B cell (primary cell): ENCODE measurements at regions of chrX and their contacts with region 1.

Region 1: DNA sequence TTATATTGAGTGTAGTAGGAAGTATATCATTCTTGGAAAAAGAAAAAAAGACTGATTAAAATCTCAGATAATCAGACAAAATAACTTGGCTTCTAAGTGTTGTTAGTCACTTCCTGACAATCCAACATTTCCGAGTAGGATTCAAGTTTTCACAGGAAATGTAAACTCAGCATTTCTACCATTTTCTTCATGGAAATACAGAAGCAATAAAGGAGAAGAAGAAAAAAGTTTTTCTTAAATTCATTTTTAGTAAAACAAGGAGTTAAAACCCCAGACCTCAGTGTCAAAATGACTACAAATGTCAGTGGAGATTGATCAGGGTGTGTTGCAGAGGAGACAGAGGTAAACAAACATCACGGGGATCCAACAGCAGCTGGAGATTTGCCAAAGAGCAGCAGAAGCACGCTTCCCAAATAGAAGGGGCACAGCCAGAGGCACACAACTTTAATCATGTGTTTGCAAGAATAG is 129.3 kb upstream of the FAM9B start:
- DNase-seq: no peak
- ATAC-seq: no peak
- H3K4me3 ChIP-seq: no peak overlapping the region
- H3K4me3 Mint-ChIP-seq: no peak overlapping the region
- H3K27ac ChIP-seq: no peak overlapping the region
- H3K27ac Mint-ChIP-seq: no peak overlapping the region
- H3K4me1 ChIP-seq: peaks cover 5 to 15% of the 10 kb centered on the region in 2 donors
- H3K4me1 Mint-ChIP-seq: peaks cover 26% of the 10 kb centered on the region
- H3K27me3 ChIP-seq: peaks cover 0 to 23% (median 9%) of the 10 kb centered on the region in 4 experiments
- H3K27me3 Mint-ChIP-seq: peaks cover 29% of the 10 kb centered on the region
- CTCF ChIP-seq: no peak

Region 2: DNA sequence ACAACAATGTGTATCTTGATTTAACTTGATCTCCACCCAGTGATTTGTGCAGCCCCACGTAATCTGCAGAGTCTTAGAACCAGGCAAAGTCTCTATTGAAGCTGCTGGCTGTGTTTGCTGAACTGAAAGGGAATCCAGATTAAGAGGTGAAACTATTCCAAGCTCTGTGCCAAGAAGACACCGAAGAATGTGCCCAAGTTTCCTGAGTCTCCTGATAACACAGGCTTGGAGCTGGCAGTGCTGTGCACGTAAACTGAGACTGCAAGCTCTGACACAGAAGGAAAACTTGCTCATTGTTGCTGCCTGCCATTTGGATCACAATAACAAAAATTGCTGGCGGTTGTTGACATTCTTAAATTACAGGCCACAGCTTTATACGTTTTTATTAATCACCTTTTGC is 758.8 kb before region 1 on chrX:
- CTCF ChIA-PET with region 1: no interaction called
- POLR2A ChIA-PET with region 1: no interaction called
- intact Hi-C with region 1: no loop called
- DNase-seq: no peak
- ATAC-seq: no peak
- H3K4me3 ChIP-seq: no peak overlapping the region
- H3K4me3 Mint-ChIP-seq: no peak overlapping the region
- H3K27ac ChIP-seq: no peak overlapping the region
- H3K27ac Mint-ChIP-seq: no peak overlapping the region
- H3K4me1 ChIP-seq: no peaks in the 10 kb centered on the region
- H3K4me1 Mint-ChIP-seq: no peaks in the 10 kb centered on the region
- H3K27me3 ChIP-seq: no peaks in the 10 kb centered on the region
- H3K27me3 Mint-ChIP-seq: no peaks in the 10 kb centered on the region
- CTCF ChIP-seq: no peak

Region 3: GRCh38 chrX:9091258-9091657 is 72.0 kb before region 1 on chrX:
- CTCF ChIA-PET with region 1: no interaction called
- POLR2A ChIA-PET with region 1: no interaction called
- intact Hi-C with region 1: loop called (anchors 10 kb)
- DNase-seq: peak; percentile 55
- ATAC-seq: peak; percentile 36
- H3K4me3 ChIP-seq: no peak overlapping the region
- H3K4me3 Mint-ChIP-seq: no peak overlapping the region
- H3K27ac ChIP-seq: no peak overlapping the region
- H3K27ac Mint-ChIP-seq: peak overlapping the region; percentile 77
- H3K4me1 ChIP-seq: peaks cover 0 to 5% of the 10 kb centered on the region in 2 donors
- H3K4me1 Mint-ChIP-seq: peaks cover 11% of the 10 kb centered on the region
- H3K27me3 ChIP-seq: peaks cover 0 to 7% (median 0%) of the 10 kb centered on the region in 4 experiments
- H3K27me3 Mint-ChIP-seq: peaks cover 6% of the 10 kb centered on the region
- CTCF ChIP-seq: no peak

Region 4: DNA sequence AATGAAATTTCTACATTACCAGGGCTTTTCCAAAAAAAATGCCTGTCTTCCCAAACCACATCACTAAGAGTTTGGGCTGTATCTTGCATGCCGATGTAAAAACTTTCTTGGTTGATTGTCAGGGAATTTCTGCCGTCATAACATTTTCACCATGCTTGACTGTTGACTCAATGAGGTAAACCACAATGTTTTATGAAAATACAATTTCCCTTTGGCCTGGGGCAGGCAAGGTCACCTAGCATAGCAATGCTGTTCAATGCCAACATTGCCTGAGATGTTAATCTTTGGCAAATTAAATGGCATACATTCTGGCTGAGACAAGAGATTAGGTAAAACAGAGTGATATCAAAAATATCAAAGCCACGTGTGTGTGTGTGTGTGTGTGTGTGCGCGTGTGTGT is 164.5 kb after region 1 on chrX:
- CTCF ChIA-PET with region 1: no interaction called
- POLR2A ChIA-PET with region 1: no interaction called
- intact Hi-C with region 1: no loop called
- DNase-seq: no peak
- ATAC-seq: no peak
- H3K4me3 ChIP-seq: no peak overlapping the region
- H3K4me3 Mint-ChIP-seq: no peak overlapping the region
- H3K27ac ChIP-seq: no peak overlapping the region
- H3K27ac Mint-ChIP-seq: no peak overlapping the region
- H3K4me1 ChIP-seq: no peaks in the 10 kb centered on the region
- H3K4me1 Mint-ChIP-seq: peaks cover 13% of the 10 kb centered on the region
- H3K27me3 ChIP-seq: no peaks in the 10 kb centered on the region
- H3K27me3 Mint-ChIP-seq: peaks cover 3% of the 10 kb centered on the region
- CTCF ChIP-seq: no peak